Caco-2 (cell line): ENCODE measurements at regions of chr6 and their contacts with region 1.

Region 1: DNA sequence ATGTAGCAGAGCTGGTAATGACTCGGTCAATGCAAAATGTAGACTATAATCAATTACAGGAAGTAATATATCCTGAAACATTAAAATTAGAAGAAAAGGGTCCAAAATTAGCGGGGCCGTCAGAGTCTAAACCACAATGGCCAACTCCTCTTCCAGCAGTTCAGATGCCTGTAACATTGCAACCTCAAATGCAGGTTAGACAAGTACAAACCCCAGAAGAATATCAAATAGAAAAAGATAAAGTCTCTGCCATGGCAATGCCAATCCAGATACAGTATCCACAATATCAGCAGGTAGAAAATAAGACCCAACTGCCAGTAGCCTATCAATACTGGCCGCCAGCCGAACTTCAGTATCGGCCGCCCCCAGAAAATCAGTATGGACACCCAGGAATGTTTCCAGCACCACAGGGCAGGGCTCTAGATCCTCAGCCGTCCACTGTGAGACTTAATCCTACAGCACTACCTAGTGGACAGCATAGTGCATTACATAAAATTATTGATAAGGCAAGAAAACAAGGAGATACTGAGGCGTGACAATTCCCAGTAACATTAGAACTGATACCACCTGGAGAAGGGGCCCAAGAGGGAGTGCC is 158.4 kb downstream of the GPX5 start:
- DNase-seq: peak; percentile 49 to 65
- H3K4me3 ChIP-seq: peak overlapping the region; percentile 16; the same call in 1 of the 2 replicates
- H3K4me3 Mint-ChIP-seq: peak overlapping the region; percentile 73
- H3K27ac Mint-ChIP-seq: no peak overlapping the region
- H3K4me1 ChIP-seq: peaks cover 18% of the 10 kb centered on the region
- H3K4me1 Mint-ChIP-seq: peaks cover 44% of the 10 kb centered on the region
- H3K27me3 ChIP-seq: no peaks in the 10 kb centered on the region
- H3K27me3 Mint-ChIP-seq: no peaks in the 10 kb centered on the region
- CTCF ChIP-seq: peak; percentile 63 to 72

Region 2: GRCh38 chr6:28393911-28394662 is 290.0 kb before region 1 on chr6:
- CTCF ChIA-PET with region 1: no interaction called
- POLR2A ChIA-PET with region 1: no interaction called
- intact Hi-C with region 1: loop called (anchors 1 kb)
- DNase-seq: peak in 1 of 2 experiments; percentile 23
- H3K4me3 ChIP-seq: no peak overlapping the region
- H3K4me3 Mint-ChIP-seq: no peak overlapping the region
- H3K27ac Mint-ChIP-seq: no peak overlapping the region
- H3K4me1 ChIP-seq: no peaks in the 10 kb centered on the region
- H3K4me1 Mint-ChIP-seq: no peaks in the 10 kb centered on the region
- H3K27me3 ChIP-seq: no peaks in the 10 kb centered on the region
- H3K27me3 Mint-ChIP-seq: peaks cover 5% of the 10 kb centered on the region
- CTCF ChIP-seq: peak; percentile 33 to 35

Region 3: DNA sequence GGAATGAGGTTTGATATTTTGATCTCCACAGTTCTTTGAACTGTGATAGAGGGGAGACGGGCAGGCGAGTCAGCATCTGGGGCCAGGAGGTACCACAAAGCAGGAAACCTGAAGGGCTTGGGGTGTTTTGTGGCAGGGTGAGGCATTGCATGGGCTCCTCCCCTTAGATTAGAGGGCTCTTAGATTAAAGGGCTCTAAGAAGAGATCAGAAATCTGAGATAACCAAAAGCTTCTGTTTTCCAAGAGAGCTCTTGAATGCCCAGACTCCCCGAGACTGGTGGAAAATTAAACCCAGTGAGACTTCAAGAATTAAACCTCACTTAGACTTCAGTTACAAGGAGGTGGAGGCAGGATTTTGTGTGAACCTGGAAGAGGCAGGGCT is 160.8 kb before region 1 on chr6:
- CTCF ChIA-PET with region 1: no interaction called
- POLR2A ChIA-PET with region 1: no interaction called
- intact Hi-C with region 1: no loop called
- DNase-seq: no peak
- H3K4me3 ChIP-seq: no peak overlapping the region
- H3K4me3 Mint-ChIP-seq: no peak overlapping the region
- H3K27ac Mint-ChIP-seq: no peak overlapping the region
- H3K4me1 ChIP-seq: no peaks in the 10 kb centered on the region
- H3K4me1 Mint-ChIP-seq: no peaks in the 10 kb centered on the region
- H3K27me3 ChIP-seq: no peaks in the 10 kb centered on the region
- H3K27me3 Mint-ChIP-seq: peaks cover 24% of the 10 kb centered on the region
- CTCF ChIP-seq: no peak

Region 4: GRCh38 chr6:28589234-28589956 is 94.6 kb before region 1 on chr6:
- CTCF ChIA-PET with region 1: no interaction called
- POLR2A ChIA-PET with region 1: no interaction called
- intact Hi-C with region 1: loop called (anchors 1 kb)
- DNase-seq: peak; percentile 76 to 83
- H3K4me3 ChIP-seq: peak overlapping the region; percentile 3; the same call in 1 of the 2 replicates
- H3K4me3 Mint-ChIP-seq: peak overlapping the region; percentile 55
- H3K27ac Mint-ChIP-seq: no peak overlapping the region
- H3K4me1 ChIP-seq: no peaks in the 10 kb centered on the region
- H3K4me1 Mint-ChIP-seq: peaks cover 11% of the 10 kb centered on the region
- H3K27me3 ChIP-seq: no peaks in the 10 kb centered on the region
- H3K27me3 Mint-ChIP-seq: peaks cover 7% of the 10 kb centered on the region
- CTCF ChIP-seq: no peak

Region 5: GRCh38 chr6:28725890-28726348 is 41.9 kb after region 1 on chr6:
- CTCF ChIA-PET with region 1: interaction called, 3 read pairs
- POLR2A ChIA-PET with region 1: no interaction called
- intact Hi-C with region 1: loop called (anchors 1 kb)
- DNase-seq: no peak
- H3K4me3 ChIP-seq: no peak overlapping the region
- H3K4me3 Mint-ChIP-seq: no peak overlapping the region
- H3K27ac Mint-ChIP-seq: no peak overlapping the region
- H3K4me1 ChIP-seq: 0 out of 2 replicates have a peak, but pooled peaks cover 3% of the 10 kb centered on the region
- H3K4me1 Mint-ChIP-seq: peaks cover 20% of the 10 kb centered on the region
- H3K27me3 ChIP-seq: no peaks in the 10 kb centered on the region
- H3K27me3 Mint-ChIP-seq: peaks cover 4% of the 10 kb centered on the region
- CTCF ChIP-seq: no peak

Region 6: DNA sequence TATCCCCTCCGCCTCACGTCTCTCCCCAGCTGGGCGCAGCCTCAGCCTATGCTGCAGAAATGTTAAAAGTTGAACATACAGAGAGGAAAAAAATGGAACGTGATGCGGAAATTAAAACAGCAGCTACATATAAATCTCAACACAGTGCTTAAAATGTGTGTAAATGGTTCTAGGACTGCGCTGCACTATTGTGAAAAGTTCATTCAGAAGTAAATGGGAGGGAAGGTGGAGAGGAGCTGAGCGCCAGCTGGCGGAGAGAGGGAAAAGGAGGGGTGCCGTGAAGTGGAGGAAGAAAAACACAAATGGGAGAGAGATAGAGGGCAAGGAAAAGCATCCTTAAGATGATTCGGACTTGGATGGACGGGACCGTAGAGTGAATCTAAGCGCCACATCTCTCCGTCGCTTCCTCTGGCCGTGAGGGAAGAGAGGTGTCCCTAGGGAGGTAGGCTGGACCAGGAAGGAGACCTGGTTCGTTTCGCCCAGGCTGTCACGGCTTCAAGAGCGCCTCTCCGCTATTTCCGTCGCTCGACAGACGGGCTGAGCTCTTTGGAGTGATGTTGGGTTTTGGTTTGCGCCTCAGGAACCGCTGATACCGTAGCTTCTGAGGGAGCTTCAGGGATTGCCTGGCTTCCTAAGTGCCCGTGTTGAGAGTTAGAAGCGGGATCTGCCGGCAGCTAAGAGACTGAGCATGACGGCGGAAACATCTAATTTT is 126.1 kb after region 1 on chr6:
- CTCF ChIA-PET with region 1: no interaction called
- POLR2A ChIA-PET with region 1: no interaction called
- intact Hi-C with region 1: loop called (anchors 2 kb)
- DNase-seq: no peak
- H3K4me3 ChIP-seq: peak overlapping the region; percentile 35
- H3K4me3 Mint-ChIP-seq: peak overlapping the region; percentile 74
- H3K27ac Mint-ChIP-seq: no peak overlapping the region
- H3K4me1 ChIP-seq: no peaks in the 10 kb centered on the region
- H3K4me1 Mint-ChIP-seq: no peaks in the 10 kb centered on the region
- H3K27me3 ChIP-seq: no peaks in the 10 kb centered on the region
- H3K27me3 Mint-ChIP-seq: no peaks in the 10 kb centered on the region
- CTCF ChIP-seq: peak in 1 of 2 experiments; percentile 47

Region 7: GRCh38 chr6:28863604-28864320 is 179.7 kb after region 1 on chr6:
- CTCF ChIA-PET with region 1: interaction called, 4 read pairs
- POLR2A ChIA-PET with region 1: no interaction called
- intact Hi-C with region 1: loop called (anchors 1 kb)
- DNase-seq: peak; percentile 85 to 87
- H3K4me3 ChIP-seq: peak overlapping the region; percentile 81
- H3K4me3 Mint-ChIP-seq: peak overlapping the region; percentile 79
- H3K27ac Mint-ChIP-seq: peak overlapping the region; percentile 96
- H3K4me1 ChIP-seq: peaks cover 11% of the 10 kb centered on the region
- H3K4me1 Mint-ChIP-seq: peaks cover 20% of the 10 kb centered on the region
- H3K27me3 ChIP-seq: no peaks in the 10 kb centered on the region
- H3K27me3 Mint-ChIP-seq: no peaks in the 10 kb centered on the region
- CTCF ChIP-seq: no peak